Right cardiac atrium (tissue), 5 donors: ENCODE measurements at regions of chr17 and their contacts with region 1.

Region 1: GRCh38 chr17:75764711-75765421 is at the start of gene GALK1:
- DNase-seq: peak; percentile 83 to 92 (median 91)
- ATAC-seq: peak; percentile 88 to 92
- H3K4me3 ChIP-seq: peak within 1 kb of the TSS; percentile 52
- H3K27ac ChIP-seq: peak within 1 kb of the TSS; percentile 65
- H3K4me1 ChIP-seq: peaks cover 2% of the 10 kb centered on the region
- H3K27me3 ChIP-seq: no peaks in the 10 kb centered on the region
- total RNA-seq, gene GALK1: 15.9 to 19.5 (median 17.3) TPM

Region 2: GRCh38 chr17:75896415-75897159 is 131.7 kb after region 1 on chr17 and contains the start of gene TRIM65:
- intact Hi-C with region 1: loop called in 1 of 4 experiments (anchors 10 kb)
- DNase-seq: peak; percentile 91 to 96 (median 95)
- ATAC-seq: peak; percentile 80 to 87
- H3K4me3 ChIP-seq: peak within 1 kb of the TSS; percentile 60
- H3K27ac ChIP-seq: peak within 1 kb of the TSS; percentile 90
- H3K4me1 ChIP-seq: no peaks in the 10 kb centered on the region
- H3K27me3 ChIP-seq: no peaks in the 10 kb centered on the region
- total RNA-seq, gene TRIM65: 5.7 to 10.7 (median 7.7) TPM